ENCODE measurements at regions of chr13 and their contacts with region 1.

Region 1: GRCh38 chr13:49936085-49936940 is at the start of gene SPRYD7:
- DNase-seq: peak; percentile 90
- ATAC-seq: peak; percentile 97
- H3K4me3 ChIP-seq: peak within 1 kb of the TSS; percentile 82
- H3K27ac ChIP-seq: peak within 1 kb of the TSS; percentile 58
- H3K4me1 ChIP-seq: 0 out of 2 replicates have a peak, but pooled peaks cover 2% of the 10 kb centered on the region
- H3K27me3 ChIP-seq: no peaks in the 10 kb centered on the region
- CTCF ChIP-seq: peak; percentile 96 to 97 (median 96)
- EP300 ChIP-seq: 0 out of 4 replicates have a peak, but pooled peaks of 1 of the 2 experiments have one; percentile 2
- POLR2A ChIP-seq: peak; percentile 91
- RAD21 ChIP-seq: peak; percentile 56
- polyA plus RNA-seq, gene SPRYD7: 12.9 to 13.0 TPM

Region 2: DNA sequence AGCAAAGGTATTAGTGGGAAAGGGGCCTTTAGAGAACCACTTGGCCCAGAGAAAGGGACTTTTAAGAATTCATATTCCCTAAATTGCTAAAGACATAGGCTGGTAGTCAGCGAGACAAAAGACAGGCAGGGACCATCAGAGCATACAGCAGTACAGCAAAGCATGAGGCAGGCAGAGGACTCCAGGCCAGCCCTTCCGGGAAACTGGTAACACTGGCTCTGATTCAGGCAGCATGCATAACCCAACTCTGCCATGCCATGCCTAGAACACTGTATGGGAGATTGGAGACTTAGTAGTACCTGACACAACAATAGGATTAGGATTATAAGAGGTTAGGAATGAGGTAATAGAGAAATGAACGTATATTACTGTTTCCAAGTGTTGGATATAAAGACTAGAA is 527.3 kb before region 1 on chr13:
- CTCF ChIA-PET with region 1: no interaction called
- POLR2A ChIA-PET with region 1: no interaction called
- RAD21 ChIA-PET with region 1: no interaction called
- SMC1A ChIA-PET with region 1: no interaction called
- in situ Hi-C with region 1: no loop called
- intact Hi-C with region 1: no loop called
- DNase-seq: no peak
- ATAC-seq: no peak
- H3K4me3 ChIP-seq: no peak overlapping the region
- H3K27ac ChIP-seq: no peak overlapping the region
- H3K4me1 ChIP-seq: no peaks in the 10 kb centered on the region; the same call in 1 of the 2 replicates
- H3K27me3 ChIP-seq: no peaks in the 10 kb centered on the region
- CTCF ChIP-seq: no peak
- EP300 ChIP-seq: no peak
- POLR2A ChIP-seq: no peak
- RAD21 ChIP-seq: no peak

Region 3: GRCh38 chr13:49925881-49926418 is 10.4 kb before region 1 on chr13:
- CTCF ChIA-PET with region 1: interaction called, 7 read pairs
- POLR2A ChIA-PET with region 1: interaction called, 12 read pairs
- RAD21 ChIA-PET with region 1: interaction called, 7 read pairs
- SMC1A ChIA-PET with region 1: interaction called, 3 read pairs
- in situ Hi-C with region 1: no loop called
- intact Hi-C with region 1: no loop called
- DNase-seq: no peak
- ATAC-seq: peak; percentile 86
- H3K4me3 ChIP-seq: no peak overlapping the region
- H3K27ac ChIP-seq: no peak overlapping the region
- H3K4me1 ChIP-seq: peaks cover 5% of the 10 kb centered on the region
- H3K27me3 ChIP-seq: no peaks in the 10 kb centered on the region
- CTCF ChIP-seq: no peak
- EP300 ChIP-seq: no peak
- POLR2A ChIP-seq: no peak
- RAD21 ChIP-seq: no peak

Region 4: DNA sequence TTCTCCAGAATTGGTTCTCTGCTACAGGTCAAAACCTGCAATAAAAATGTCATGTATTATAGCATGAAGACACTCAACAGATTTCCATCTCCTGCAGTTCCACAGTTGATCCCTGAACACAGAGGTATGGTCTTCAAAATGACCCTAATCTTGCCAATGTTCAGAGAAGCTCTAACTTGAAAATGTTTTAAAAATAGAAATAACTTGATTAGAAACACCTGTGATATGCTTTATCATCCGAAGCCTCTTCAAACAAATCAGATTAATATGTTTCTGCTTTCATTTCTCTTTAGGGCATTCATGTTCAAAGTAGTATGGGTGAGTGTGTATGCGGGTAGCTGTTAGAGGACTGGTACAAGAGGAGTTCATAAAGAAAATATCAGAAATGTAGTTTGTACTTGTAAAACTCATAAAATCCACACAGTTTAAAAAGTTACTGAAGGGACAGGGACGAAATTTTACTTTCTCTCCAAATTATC is 139.3 kb after region 1 on chr13:
- CTCF ChIA-PET with region 1: interaction called, 3 read pairs
- POLR2A ChIA-PET with region 1: interaction called, 3 read pairs
- RAD21 ChIA-PET with region 1: interaction called, 5 read pairs
- SMC1A ChIA-PET with region 1: no interaction called
- in situ Hi-C with region 1: no loop called
- intact Hi-C with region 1: loop called (anchors 5 kb)
- DNase-seq: no peak
- ATAC-seq: peak; percentile 67
- H3K4me3 ChIP-seq: peak overlapping the region; percentile 48
- H3K27ac ChIP-seq: peak overlapping the region; percentile 51
- H3K4me1 ChIP-seq: peaks cover 8% of the 10 kb centered on the region; the same call in 1 of the 2 replicates
- H3K27me3 ChIP-seq: no peaks in the 10 kb centered on the region
- CTCF ChIP-seq: no peak
- EP300 ChIP-seq: no peak
- POLR2A ChIP-seq: no peak
- RAD21 ChIP-seq: no peak